Caco-2 (cell line): ENCODE measurements at regions of chr12 and their contacts with region 1.

Region 1: DNA sequence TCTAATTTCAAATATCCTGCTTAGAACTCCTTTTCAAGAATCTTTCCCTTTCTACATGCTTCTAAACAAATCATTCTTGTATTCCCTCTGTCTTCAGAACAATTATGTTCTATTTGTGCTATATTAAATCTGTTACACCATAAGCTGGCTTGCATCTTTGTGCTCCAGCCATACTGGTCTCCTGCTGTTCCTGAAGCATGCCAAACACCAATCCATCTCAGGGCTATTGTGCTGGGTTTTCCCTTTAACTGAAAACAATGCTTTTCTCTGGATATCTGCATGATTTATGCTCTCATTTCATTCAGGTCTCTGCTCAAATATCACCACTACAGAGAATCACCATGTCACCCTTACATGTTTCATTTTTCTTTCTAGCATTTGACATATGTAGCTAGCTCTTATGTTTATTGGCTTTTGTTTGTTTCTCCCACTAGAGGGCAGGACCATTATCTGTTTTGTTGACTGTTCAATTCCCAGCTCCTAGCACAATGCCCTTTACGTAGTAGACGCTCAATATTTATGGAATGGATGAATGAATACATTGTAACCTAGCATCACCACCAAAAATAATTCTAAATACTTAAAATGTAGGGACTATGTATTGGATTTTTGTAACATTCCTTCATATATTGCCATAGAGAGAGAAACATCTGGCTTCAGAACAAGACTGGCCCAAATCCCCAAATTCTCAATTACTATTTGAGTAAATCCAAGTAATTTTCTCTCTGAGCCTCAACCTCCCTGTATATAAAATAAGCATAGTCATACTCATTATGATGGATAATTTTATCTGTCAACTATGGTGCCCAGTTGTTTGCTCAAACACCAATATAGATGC is 302.0 kb upstream of the SYT1 start:
- DNase-seq: no peak
- H3K4me3 ChIP-seq: no peak overlapping the region
- H3K4me3 Mint-ChIP-seq: no peak overlapping the region
- H3K27ac Mint-ChIP-seq: no peak overlapping the region
- H3K4me1 ChIP-seq: no peaks in the 10 kb centered on the region
- H3K4me1 Mint-ChIP-seq: no peaks in the 10 kb centered on the region
- H3K27me3 ChIP-seq: no peaks in the 10 kb centered on the region
- H3K27me3 Mint-ChIP-seq: peaks cover 5% of the 10 kb centered on the region
- CTCF ChIP-seq: peak; percentile 19 to 27

Region 2: GRCh38 chr12:79006306-79006705 is 443.7 kb after region 1 on chr12:
- CTCF ChIA-PET with region 1: no interaction called
- POLR2A ChIA-PET with region 1: no interaction called
- intact Hi-C with region 1: loop called (anchors 10 kb)
- DNase-seq: no peak
- H3K4me3 ChIP-seq: no peak overlapping the region
- H3K4me3 Mint-ChIP-seq: no peak overlapping the region
- H3K27ac Mint-ChIP-seq: no peak overlapping the region
- H3K4me1 ChIP-seq: no peaks in the 10 kb centered on the region
- H3K4me1 Mint-ChIP-seq: no peaks in the 10 kb centered on the region
- H3K27me3 ChIP-seq: no peaks in the 10 kb centered on the region; the same call in 1 of the 2 replicates
- H3K27me3 Mint-ChIP-seq: no peaks in the 10 kb centered on the region
- CTCF ChIP-seq: no peak